ENCODE measurements at regions of chr9 and their contacts with region 1.

Region 1: GRCh38 chr9:129884220-129885017 is 49.2 kb downstream of the USP20 start:
- DNase-seq: peak; percentile 94
- H3K4me3 Mint-ChIP-seq: peak overlapping the region; percentile 82
- H3K27ac Mint-ChIP-seq: peak overlapping the region; percentile 99
- H3K4me1 Mint-ChIP-seq: peaks cover 39% of the 10 kb centered on the region
- H3K27me3 Mint-ChIP-seq: no peaks in the 10 kb centered on the region

Region 2: DNA sequence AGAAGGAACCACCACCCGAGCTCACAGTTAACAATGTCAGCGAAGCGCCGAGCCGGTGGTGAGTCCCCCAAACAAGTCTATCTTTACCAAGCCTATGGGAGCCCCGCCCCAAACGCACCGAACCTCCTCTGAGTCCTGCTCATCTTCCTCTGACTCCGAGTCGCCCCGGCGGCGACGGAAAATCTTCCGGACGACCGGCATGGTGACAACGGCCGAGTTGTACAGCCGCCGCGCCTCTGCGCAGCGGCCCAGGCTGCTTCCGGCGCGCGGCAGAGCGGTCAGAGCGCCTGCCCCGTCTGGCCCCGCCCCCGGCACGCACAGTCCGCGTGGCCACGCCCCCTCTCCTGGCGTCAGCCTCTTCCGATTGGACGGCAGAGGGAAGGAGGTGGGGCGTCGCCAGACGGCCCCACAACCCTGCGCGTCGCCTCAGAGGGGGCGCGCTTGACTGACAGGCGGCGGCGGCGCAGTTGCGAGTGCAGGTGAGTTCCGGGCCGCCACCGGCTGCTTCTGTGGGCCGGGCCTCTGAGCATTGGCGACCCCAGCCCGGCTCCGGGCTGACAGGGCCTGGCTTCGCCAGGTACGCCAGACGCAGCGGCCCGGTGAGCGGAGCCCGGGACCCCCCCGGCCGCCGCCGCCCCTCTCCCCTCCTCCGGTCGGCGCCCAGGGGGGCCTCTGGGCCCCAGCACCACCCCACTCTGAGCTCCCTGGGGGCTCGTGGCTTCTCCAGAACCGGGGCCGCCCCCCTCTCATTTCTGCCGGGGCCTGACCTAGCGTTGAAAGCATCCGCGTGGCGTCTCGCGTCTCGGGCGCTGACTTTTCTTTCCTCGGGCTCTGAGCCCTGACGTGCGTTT is 49.2 kb before region 1 on chr9 and contains the starts of genes C9orf78 and USP20:
- intact Hi-C with region 1: loop called (anchors 1 kb)
- DNase-seq: peak; percentile 95
- H3K4me3 Mint-ChIP-seq: peak within 1 kb of the TSS; percentile 98
- H3K27ac Mint-ChIP-seq: peak within 1 kb of the TSS; percentile 98
- H3K4me1 Mint-ChIP-seq: peaks cover 46% of the 10 kb centered on the region
- H3K27me3 Mint-ChIP-seq: no peaks in the 10 kb centered on the region
- total RNA-seq, gene C9orf78: 54.4 and 59.6 TPM in 2 replicates
- total RNA-seq, gene USP20: 45.6 and 52.3 TPM in 2 replicates

Region 3: GRCh38 chr9:129895376-129896268 is 11.2 kb after region 1 on chr9:
- intact Hi-C with region 1: loop called (anchors 1 kb)
- DNase-seq: peak; percentile 36
- H3K4me3 Mint-ChIP-seq: peak overlapping the region; percentile 19
- H3K27ac Mint-ChIP-seq: peak overlapping the region; percentile 99
- H3K4me1 Mint-ChIP-seq: peaks cover 69% of the 10 kb centered on the region
- H3K27me3 Mint-ChIP-seq: no peaks in the 10 kb centered on the region

Region 4: DNA sequence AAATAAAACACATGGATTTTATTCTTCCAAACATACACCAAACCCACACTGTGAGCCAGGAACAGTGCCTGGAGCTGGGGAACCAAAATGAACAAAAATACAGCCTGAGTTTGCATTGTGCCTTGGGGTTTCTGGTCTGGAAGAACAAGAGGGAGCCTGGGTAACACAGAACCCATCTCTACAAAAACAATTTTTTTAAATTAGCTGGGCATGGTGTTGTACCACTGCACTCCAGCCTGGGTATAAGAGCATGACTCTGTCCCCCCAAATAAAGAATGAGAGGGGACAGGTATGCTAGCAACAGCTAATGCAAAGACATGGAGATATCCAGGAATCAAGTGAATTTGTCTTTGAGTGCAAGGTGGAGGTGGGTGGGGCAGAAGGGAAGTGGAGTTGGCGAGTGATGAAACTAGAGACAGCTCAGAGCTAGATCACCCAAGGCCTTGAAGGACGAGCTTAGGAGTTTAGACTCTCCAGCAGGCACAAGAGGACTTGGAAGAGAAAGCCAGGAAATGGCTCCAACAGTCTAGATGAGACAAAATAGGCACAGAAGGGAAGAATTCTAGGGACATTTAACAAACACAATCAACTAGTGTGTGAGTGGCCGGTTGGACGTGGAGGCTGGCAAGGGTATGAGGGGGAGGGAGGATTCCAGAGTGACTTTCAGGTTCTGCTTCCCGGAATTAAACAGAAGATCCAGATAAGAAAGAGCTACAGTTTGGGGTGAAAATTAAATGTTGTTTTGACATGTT is 111.2 kb after region 1 on chr9:
- intact Hi-C with region 1: loop called (anchors 2 kb)
- DNase-seq: no peak
- H3K4me3 Mint-ChIP-seq: peak overlapping the region; percentile 68
- H3K27ac Mint-ChIP-seq: peak overlapping the region; percentile 95
- H3K4me1 Mint-ChIP-seq: peaks cover 56% of the 10 kb centered on the region
- H3K27me3 Mint-ChIP-seq: no peaks in the 10 kb centered on the region

Region 5: DNA sequence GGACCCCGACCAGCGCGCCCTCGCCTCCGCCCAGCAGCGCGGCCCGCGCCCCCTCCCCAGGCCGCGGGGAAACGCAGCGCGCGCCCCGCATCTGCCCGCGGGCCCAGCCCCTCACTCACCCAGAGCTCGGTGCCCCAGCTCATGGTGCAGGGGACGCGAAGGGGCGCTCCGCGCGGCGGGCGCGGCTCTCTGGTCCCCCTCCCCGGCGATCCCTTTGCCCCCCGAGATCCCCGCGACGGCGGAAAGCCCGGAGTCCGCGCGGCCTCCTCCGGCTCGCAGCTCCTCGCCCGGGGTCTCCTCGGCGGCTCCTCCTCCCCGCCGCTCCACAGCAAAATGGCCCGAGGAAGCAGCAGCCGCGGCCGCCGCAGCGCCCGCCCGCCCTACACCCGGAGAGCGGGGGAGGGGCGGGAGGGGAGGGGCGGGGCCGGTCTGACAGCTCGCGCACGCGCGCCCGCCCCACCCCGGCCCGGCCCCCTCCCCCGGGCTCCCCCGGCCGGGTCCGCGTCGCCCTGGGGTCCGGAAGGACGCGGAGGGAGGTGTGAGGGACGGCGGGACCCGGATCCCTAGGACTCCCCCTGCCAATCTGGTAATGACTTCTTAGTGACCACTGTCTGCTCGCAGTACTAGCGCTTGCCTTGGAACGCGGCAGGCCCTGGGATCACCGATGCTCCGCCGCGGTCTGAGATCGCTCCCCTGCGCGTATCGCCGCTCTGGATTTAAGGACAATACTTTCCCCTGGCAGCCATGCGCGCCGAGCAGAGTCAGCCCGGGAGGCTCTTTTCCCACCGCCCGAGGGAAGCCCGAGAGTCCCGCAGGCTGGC is 158.6 kb after region 1 on chr9 and contains the start of gene FNBP1:
- intact Hi-C with region 1: loop called (anchors 2 kb)
- DNase-seq: peak; percentile 80
- H3K4me3 Mint-ChIP-seq: peak within 1 kb of the TSS; percentile 97
- H3K27ac Mint-ChIP-seq: peak within 1 kb of the TSS; percentile 96
- H3K4me1 Mint-ChIP-seq: peaks cover 39% of the 10 kb centered on the region
- H3K27me3 Mint-ChIP-seq: no peaks in the 10 kb centered on the region
- total RNA-seq, gene FNBP1: 358 and 359 TPM in 2 replicates

Region 6: DNA sequence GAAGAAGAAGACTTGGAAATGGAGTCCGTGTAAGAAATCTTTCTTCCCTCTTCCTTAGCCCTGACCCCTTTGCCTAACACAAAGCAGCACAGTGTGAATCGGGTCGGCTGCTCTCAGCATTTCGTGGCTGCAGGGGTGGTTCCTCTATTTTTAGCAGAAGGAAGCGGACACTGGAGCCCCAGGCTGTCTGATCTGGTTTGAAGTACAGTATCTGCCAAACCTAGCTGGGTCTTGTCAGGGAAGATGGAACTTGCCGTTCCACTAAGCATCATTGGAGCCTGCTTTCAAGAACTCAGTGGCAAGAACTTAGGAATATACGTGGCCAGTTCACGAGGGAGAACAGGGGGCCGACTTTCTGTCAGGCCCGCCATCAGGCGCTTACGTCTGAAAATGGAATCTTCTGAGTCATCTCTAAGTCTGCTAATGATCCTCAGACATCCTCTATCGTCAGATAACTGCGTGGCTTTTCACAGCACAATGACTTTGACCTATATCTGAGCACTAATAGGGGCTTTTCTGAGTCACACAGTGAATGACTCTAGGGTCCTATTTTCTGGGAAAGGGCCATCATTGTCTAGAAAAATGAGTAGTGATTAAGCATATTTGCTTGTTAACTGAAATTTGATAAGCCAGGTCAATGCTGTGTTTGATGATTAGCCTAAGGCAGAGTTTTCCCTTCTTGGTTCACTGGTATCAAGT is 244.5 kb after region 1 on chr9:
- intact Hi-C with region 1: loop called (anchors 1 kb)
- DNase-seq: peak; percentile 38
- H3K4me3 Mint-ChIP-seq: peak overlapping the region; percentile 82
- H3K27ac Mint-ChIP-seq: peak overlapping the region; percentile 100
- H3K4me1 Mint-ChIP-seq: peaks cover 43% of the 10 kb centered on the region
- H3K27me3 Mint-ChIP-seq: no peaks in the 10 kb centered on the region

Measured in activated T-helper 2 cell treated with anti-CD3 and anti-CD28 coated beads, Interferon-gamma antibody, Interleukin-2, Interleukin-4, amounts not matched to agents 10 μg/mL and 5 μg/mL and 100 μg/mL, durations not matched to agents 14 hours and 24 hours and 36 hours (primary cell).